Activated naive CD4-positive, alpha-beta T cell treated with anti-CD3 and anti-CD28 coated beads for 36 hours (primary cell): ENCODE measurements at regions of chr2 and their contacts with region 1.

Region 1: GRCh38 chr2:25951071-25951547 is 31.2 kb downstream of the KIF3C start:
- DNase-seq: peak; percentile 80
- H3K4me3 Mint-ChIP-seq: no peak overlapping the region
- H3K27ac Mint-ChIP-seq: no peak overlapping the region
- H3K4me1 Mint-ChIP-seq: no peaks in the 10 kb centered on the region
- H3K27me3 Mint-ChIP-seq: no peaks in the 10 kb centered on the region

Region 2: DNA sequence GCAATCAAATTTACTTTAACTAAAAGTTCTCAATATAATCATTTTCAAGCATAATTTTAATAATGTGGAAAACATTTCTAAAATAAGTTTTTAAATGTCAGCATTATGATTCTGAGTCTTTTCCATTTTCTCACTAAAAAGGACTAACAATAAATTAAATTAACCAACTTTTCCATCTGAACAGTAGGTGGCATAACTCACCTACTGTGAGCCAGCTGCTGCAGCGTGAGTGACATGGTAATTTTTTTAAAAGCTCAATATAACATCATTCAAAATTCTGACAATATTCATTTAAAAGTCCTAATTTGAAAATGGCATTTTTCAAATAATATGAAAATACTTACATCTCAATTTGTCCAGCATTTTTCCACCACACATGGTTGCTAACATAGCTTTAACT is 344.2 kb before region 1 on chr2:
- CTCF ChIA-PET with region 1: interaction called, 3 read pairs
- intact Hi-C with region 1: loop called (anchors 5 kb)
- DNase-seq: peak; percentile 20
- H3K4me3 Mint-ChIP-seq: no peak overlapping the region
- H3K27ac Mint-ChIP-seq: no peak overlapping the region
- H3K4me1 Mint-ChIP-seq: peaks cover 8% of the 10 kb centered on the region
- H3K27me3 Mint-ChIP-seq: no peaks in the 10 kb centered on the region

Region 3: DNA sequence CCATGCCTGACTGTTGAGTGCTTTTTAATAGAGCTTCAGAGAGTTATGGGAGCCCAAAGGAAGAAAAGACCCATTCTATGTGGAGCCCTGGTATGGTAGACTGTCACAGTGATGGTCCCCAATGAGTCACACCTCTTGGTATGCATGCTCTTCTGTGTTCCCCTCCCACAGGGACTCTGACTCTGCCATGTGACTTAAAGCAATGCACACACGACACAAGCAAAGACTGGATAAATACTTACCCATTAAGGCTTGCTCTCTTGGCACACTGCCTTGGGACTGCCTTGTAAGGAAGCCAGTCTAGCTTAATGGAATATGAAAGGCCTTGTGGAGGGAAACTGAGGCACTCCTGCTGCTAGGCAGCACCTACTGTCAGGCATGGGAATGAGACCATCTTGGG is 261.1 kb before region 1 on chr2:
- CTCF ChIA-PET with region 1: no interaction called
- intact Hi-C with region 1: no loop called
- DNase-seq: no peak
- H3K4me3 Mint-ChIP-seq: no peak overlapping the region
- H3K27ac Mint-ChIP-seq: no peak overlapping the region
- H3K4me1 Mint-ChIP-seq: no peaks in the 10 kb centered on the region
- H3K27me3 Mint-ChIP-seq: peaks cover 3% of the 10 kb centered on the region

Region 4: GRCh38 chr2:25982273-25982967 is 31.3 kb after region 1 on chr2 and contains the start of gene KIF3C:
- CTCF ChIA-PET with region 1: interaction called, 12 read pairs
- intact Hi-C with region 1: no loop called
- DNase-seq: peak; percentile 76
- H3K4me3 Mint-ChIP-seq: peak within 1 kb of the TSS; percentile 80
- H3K27ac Mint-ChIP-seq: no peak within 1 kb of the TSS
- H3K4me1 Mint-ChIP-seq: no peaks in the 10 kb centered on the region
- H3K27me3 Mint-ChIP-seq: no peaks in the 10 kb centered on the region
- total RNA-seq, gene KIF3C: 3.0 to 3.4 TPM

Region 5: GRCh38 chr2:26144953-26145680 is 194.0 kb after region 1 on chr2:
- CTCF ChIA-PET with region 1: interaction called, 32 read pairs
- intact Hi-C with region 1: loop called (anchors 1 kb)
- DNase-seq: peak; percentile 82
- H3K4me3 Mint-ChIP-seq: no peak overlapping the region
- H3K27ac Mint-ChIP-seq: no peak overlapping the region
- H3K4me1 Mint-ChIP-seq: no peaks in the 10 kb centered on the region
- H3K27me3 Mint-ChIP-seq: peaks cover 2% of the 10 kb centered on the region

Region 6: GRCh38 chr2:26469092-26469710 is 518.1 kb after region 1 on chr2:
- CTCF ChIA-PET with region 1: no interaction called
- intact Hi-C with region 1: loop called (anchors 1 kb)
- DNase-seq: peak; percentile 88
- H3K4me3 Mint-ChIP-seq: no peak overlapping the region
- H3K27ac Mint-ChIP-seq: no peak overlapping the region
- H3K4me1 Mint-ChIP-seq: peaks cover 2% of the 10 kb centered on the region
- H3K27me3 Mint-ChIP-seq: no peaks in the 10 kb centered on the region